ENCODE measurements at regions of chr19 and their contacts with region 1.

Region 1: DNA sequence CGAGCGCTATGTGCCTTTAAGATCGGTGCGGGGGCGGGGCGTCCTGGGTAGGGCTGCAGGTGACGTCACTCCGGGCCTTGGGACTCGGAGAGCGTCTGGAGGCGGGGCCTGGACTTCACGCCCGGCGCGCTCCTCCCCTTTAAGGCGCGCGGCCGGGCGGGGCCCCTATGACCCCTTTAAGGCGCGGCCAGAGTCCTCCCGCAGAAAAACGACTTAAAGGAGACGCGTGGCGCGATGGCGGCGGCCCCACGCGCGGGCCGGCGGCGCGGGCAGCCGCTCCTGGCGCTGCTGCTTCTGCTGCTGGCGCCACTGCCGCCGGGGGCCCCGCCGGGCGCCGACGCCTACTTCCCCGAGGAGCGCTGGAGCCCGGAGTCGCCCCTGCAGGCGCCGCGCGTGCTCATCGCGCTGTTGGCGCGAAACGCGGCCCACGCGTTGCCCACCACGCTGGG is at the start of gene COLGALT1:
- H3K4me3 Mint-ChIP-seq: peak within 1 kb of the TSS; percentile 90
- H3K27ac Mint-ChIP-seq: peak within 1 kb of the TSS; percentile 93
- H3K4me1 Mint-ChIP-seq: peaks cover 38% of the 10 kb centered on the region
- H3K27me3 Mint-ChIP-seq: no peaks in the 10 kb centered on the region

Region 2: DNA sequence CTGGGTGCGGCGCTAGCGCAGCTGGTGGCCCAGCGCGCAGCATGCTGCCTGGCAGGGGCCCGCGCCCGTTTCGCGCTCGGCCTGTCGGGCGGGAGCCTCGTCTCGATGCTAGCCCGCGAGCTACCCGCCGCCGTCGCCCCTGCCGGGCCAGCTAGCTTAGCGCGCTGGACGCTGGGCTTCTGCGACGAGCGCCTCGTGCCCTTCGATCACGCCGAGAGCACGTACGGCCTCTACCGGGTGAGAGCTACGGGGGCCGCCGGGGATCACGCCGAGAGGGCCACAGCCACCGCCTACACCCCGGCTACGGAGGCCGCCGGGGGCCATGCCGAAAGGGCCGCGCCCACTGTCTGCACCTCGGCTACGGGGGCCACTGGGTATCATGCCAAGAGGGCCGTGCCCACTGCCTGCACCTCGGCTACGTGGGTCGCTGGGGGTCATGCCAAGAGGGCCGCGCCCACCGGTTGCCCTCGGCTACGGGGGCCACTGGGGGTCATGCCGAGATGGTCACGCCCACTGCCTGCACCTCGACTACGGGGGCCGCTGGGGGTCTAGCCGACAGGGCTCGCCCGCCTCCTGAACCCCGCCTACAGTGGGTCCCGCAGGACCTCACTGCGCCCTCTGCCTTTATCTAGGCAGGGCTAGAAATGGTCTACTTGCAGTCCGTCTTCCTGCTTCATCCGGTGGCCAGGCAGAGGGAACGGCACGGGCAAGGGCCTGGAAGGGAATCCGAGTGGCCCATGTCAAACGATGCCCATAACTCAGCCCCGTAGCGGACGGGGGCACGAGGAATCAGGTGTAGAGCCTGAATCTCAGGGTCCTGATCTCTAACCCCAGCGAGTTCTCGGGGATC is 43.6 kb before region 1 on chr19:
- intact Hi-C with region 1: loop called (anchors 1 kb)
- H3K4me3 Mint-ChIP-seq: peak overlapping the region; percentile 94
- H3K27ac Mint-ChIP-seq: peak overlapping the region; percentile 92
- H3K4me1 Mint-ChIP-seq: peaks cover 48% of the 10 kb centered on the region
- H3K27me3 Mint-ChIP-seq: no peaks in the 10 kb centered on the region

Region 3: DNA sequence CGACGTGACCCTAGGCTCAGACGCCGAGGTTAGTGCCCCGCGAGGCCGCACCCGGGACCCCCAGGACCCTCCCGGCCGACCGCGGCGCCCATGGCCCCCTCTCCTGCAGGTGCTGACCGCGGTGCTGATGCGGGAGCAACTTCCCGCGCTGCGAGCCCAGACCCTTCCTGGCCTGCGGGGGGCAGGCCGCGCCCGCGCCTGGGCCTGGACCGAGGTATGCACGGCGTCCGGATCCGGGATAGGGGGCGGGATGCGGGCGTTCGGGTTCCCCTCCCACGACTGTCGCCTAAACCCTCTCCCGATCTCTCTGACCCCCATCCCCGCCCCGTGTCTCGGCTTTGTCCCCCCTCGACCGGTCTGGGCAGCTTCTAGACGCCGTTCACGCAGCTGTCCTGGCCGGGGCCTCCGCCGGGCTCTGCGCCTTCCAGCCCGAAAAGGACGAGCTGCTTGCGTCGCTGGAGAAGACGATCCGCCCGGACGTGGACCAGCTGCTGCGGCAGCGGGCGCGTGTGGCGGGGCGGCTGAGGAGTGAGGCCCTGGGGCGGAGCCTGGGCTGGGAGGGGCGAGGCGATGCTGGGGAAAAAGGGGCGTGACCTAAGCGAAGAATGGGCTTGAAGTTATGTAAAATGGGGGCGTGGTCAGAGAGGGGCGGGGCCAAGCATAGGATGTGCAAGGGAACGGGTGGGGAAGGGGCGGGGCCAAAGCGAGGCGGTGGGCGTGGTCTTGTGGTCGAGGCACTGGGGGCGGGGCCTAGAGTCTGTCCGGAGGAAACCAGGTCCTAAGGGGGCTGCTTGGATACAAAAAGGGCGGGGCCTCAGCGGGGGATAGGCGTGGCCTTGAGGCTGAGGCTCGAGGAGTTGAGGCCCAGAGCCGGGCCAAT is 16.0 kb before region 1 on chr19:
- intact Hi-C with region 1: no loop called
- H3K4me3 Mint-ChIP-seq: peak overlapping the region; percentile 82
- H3K27ac Mint-ChIP-seq: peak overlapping the region; percentile 83
- H3K4me1 Mint-ChIP-seq: peaks cover 50% of the 10 kb centered on the region
- H3K27me3 Mint-ChIP-seq: peaks cover 17% of the 10 kb centered on the region

Measured in dendritic cell treated with granulocyte-macrophage colony-stimulating factor and Interleukin-4, amounts not matched to agents 40 ng/mL and 50 ng/mL, for 4 days (primary cell).